Heart right ventricle (tissue), 16 donors: ENCODE measurements at regions of chr11 and their contacts with region 1.

Region 1: DNA sequence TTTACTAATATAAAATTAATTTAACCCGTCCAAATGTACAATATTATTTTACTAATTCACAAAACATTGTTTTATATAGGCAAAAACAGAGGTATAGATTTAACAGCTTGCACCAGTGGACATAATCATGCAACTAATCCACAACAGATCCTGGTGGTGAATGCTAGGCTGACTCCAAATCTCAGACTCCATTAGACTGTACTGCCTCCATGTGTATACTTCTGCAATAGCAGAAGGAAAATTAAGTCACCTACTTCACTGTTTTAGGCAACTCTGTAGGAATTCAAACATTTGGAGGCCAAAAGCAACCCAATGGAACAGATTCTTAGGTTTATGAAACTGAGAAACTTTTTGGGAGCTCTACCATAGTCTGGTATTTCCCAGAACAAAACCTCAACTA is 30.0 kb upstream of the RAB39A start:
- DNase-seq: no peak
- ATAC-seq: peak in 1 of 8 donors; percentile 24
- H3K4me3 ChIP-seq: no peak overlapping the region
- H3K27ac ChIP-seq: no peak overlapping the region
- H3K4me1 ChIP-seq: no peaks in the 10 kb centered on the region
- H3K27me3 ChIP-seq: peaks cover 0 to 4% (median 0%) of the 10 kb centered on the region in 7 donors
- CTCF ChIP-seq: peak in 7 of 9 donors; percentile 42 to 61 (median 54)

Region 2: DNA sequence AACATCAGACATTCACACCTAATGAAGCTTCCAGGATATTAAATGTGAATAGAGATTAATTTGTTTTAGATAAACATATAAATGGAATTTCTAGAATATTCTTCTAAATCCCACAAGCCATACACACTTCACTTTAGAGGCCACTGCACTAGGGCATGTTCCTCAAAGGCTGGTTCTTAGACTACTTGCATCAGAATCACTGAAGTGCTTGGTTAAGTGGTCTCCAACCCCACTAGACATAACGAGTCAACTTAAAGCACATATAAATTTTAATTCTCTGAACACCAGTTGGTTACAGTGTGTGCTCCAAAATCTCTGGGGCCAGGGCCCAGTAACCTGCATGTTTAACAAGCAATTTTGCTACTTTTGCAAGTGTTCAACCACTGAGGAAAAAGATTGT is 324.8 kb before region 1 on chr11:
- intact Hi-C with region 1: loop called in 1 of 10 experiments (anchors 5 kb)
- DNase-seq: no peak
- ATAC-seq: no peak
- H3K4me3 ChIP-seq: no peak overlapping the region
- H3K27ac ChIP-seq: no peak overlapping the region
- H3K4me1 ChIP-seq: no peaks in the 10 kb centered on the region
- H3K27me3 ChIP-seq: peaks cover 0 to 27% (median 7%) of the 10 kb centered on the region in 7 donors
- CTCF ChIP-seq: no peak

Region 3: GRCh38 chr11:107583629-107584195 is 314.6 kb before region 1 on chr11:
- intact Hi-C with region 1: loop called in 2 of 10 experiments (anchors 5 to 10 kb)
- DNase-seq: no peak
- ATAC-seq: no peak
- H3K4me3 ChIP-seq: no peak overlapping the region
- H3K27ac ChIP-seq: no peak overlapping the region
- H3K4me1 ChIP-seq: no peaks in the 10 kb centered on the region
- H3K27me3 ChIP-seq: peaks cover 0 to 47% (median 29%) of the 10 kb centered on the region in 7 donors
- CTCF ChIP-seq: no peak

Region 4: GRCh38 chr11:108019870-108020540 is 121.7 kb after region 1 on chr11:
- intact Hi-C with region 1: no loop called
- DNase-seq: no peak
- ATAC-seq: peak in 3 of 8 donors; percentile 41 to 51 (median 47)
- H3K4me3 ChIP-seq: no peak overlapping the region
- H3K27ac ChIP-seq: no peak overlapping the region
- H3K4me1 ChIP-seq: peaks cover 0 to 39% (median 13%) of the 10 kb centered on the region in 9 donors
- H3K27me3 ChIP-seq: no peaks in the 10 kb centered on the region
- CTCF ChIP-seq: no peak

Region 5: DNA sequence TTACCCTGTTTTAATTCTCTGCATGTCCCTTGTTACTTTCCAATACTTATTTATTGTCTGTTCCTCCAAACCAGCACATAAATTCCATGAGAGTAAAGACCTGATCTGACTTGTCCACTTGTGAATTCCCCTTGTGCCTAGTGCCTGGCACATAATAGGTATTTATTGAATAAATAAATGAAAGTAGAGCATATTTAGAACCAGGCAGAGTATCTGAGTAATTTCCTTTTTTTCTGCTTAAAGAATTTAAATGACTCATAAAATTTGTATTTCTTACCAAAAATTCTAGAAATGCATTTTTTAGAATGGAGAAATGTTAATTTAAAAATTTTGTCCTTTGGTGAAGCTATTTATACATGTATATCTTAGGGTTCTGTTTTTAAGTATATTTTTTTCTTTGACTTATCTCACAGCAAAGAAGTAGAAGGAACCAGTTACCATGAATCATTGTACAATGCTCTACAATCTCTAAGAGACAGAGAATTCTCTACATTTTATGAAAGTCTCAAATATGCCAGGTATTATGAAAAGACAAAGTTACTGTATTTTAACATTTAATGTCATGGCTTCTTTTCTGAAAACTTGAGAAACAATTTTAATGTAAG is 421.4 kb after region 1 on chr11:
- intact Hi-C with region 1: no loop called
- DNase-seq: no peak
- ATAC-seq: no peak
- H3K4me3 ChIP-seq: no peak overlapping the region
- H3K27ac ChIP-seq: no peak overlapping the region
- H3K4me1 ChIP-seq: peaks cover 0 to 7% (median 0%) of the 10 kb centered on the region in 9 donors
- H3K27me3 ChIP-seq: no peaks in the 10 kb centered on the region
- CTCF ChIP-seq: no peak